Left colon (tissue), 2 donors: ENCODE measurements at regions of chr1 and their contacts with region 1.

Region 1: GRCh38 chr1:199684686-199685273 is 342.7 kb upstream of the NR5A2 start:
- DNase-seq: peak in 1 of 2 donors; percentile 9
- ATAC-seq: peak; percentile 93

Region 2: GRCh38 chr1:199522936-199523335 is 161.8 kb before region 1 on chr1:
- intact Hi-C with region 1: no loop called
- DNase-seq: no peak
- ATAC-seq: no peak

Region 3: GRCh38 chr1:200506471-200506870 is 821.7 kb after region 1 on chr1:
- intact Hi-C with region 1: loop called in 1 of 2 experiments (anchors 10 kb)
- DNase-seq: no peak
- ATAC-seq: no peak